IMR-90 (cell line): ENCODE measurements at regions of chr18 and their contacts with region 1.

Region 1: GRCh38 chr18:74196220-74197119 is 48.1 kb downstream of the TIMM21 start:
- DNase-seq: peak; percentile 66
- ATAC-seq: peak; percentile 92
- H3K4me3 ChIP-seq: peak overlapping the region; percentile 24; the same call in 1 of the 2 replicates
- H3K27ac ChIP-seq: no peak overlapping the region
- H3K4me1 ChIP-seq: peaks cover 3% of the 10 kb centered on the region; the same call in 1 of the 2 replicates
- H3K27me3 ChIP-seq: peaks cover 13% of the 10 kb centered on the region
- CTCF ChIP-seq: peak; percentile 87
- POLR2A ChIP-seq: 0 out of 2 replicates have a peak, but pooled peaks have one; percentile 29
- RAD21 ChIP-seq: peak; percentile 91

Region 2: DNA sequence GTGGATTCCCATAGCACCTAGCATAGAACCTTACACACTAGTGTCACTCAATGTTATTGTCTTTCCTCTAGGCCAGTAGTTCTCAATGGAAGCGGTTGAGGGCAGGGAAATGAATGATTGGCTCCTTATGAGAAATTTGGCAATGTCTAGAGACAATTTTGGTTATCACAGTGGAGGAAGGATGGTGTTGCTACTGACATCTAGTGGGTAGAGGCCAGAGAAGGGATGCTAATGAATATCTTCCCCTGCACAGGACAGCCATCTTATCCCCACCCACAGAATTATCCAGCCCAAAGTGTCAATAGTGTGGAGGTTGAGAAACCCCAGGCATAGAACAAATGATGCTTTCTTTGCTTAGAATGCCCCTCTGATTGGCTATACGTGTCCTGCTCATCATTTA is 134.9 kb after region 1 on chr18:
- CTCF ChIA-PET with region 1: no interaction called
- POLR2A ChIA-PET with region 1: no interaction called
- dilution Hi-C with region 1: no loop called
- in situ Hi-C with region 1: loop called (anchors 5 kb)
- intact Hi-C with region 1: loop called (anchors 1 kb)
- DNase-seq: peak; percentile 51
- ATAC-seq: peak; percentile 98
- H3K4me3 ChIP-seq: no peak overlapping the region
- H3K27ac ChIP-seq: no peak overlapping the region
- H3K4me1 ChIP-seq: peaks cover 1% of the 10 kb centered on the region; the same call in 1 of the 2 replicates
- H3K27me3 ChIP-seq: no peaks in the 10 kb centered on the region; the same call in 1 of the 2 replicates
- CTCF ChIP-seq: peak; percentile 60
- POLR2A ChIP-seq: no peak
- RAD21 ChIP-seq: peak; percentile 53

Region 3: GRCh38 chr18:74495581-74496507 is 299.4 kb after region 1 on chr18 and contains the start of gene CNDP2:
- CTCF ChIA-PET with region 1: no interaction called
- POLR2A ChIA-PET with region 1: no interaction called
- dilution Hi-C with region 1: no loop called
- in situ Hi-C with region 1: no loop called
- intact Hi-C with region 1: loop called (anchors 2 kb)
- DNase-seq: peak; percentile 98
- ATAC-seq: peak; percentile 94
- H3K4me3 ChIP-seq: peak within 1 kb of the TSS; percentile 79
- H3K27ac ChIP-seq: peak within 1 kb of the TSS; percentile 61
- H3K4me1 ChIP-seq: peaks cover 5% of the 10 kb centered on the region; the same call in 1 of the 2 replicates
- H3K27me3 ChIP-seq: peaks cover 2% of the 10 kb centered on the region; the same call in 1 of the 2 replicates
- CTCF ChIP-seq: no peak
- POLR2A ChIP-seq: peak; percentile 64; the same call in 1 of the 2 replicates
- RAD21 ChIP-seq: no peak
- total RNA-seq, gene CNDP2: 52.0 and 52.2 TPM in 2 replicates